ENCODE measurements at regions of chr3 and their contacts with region 1.

Region 1: DNA sequence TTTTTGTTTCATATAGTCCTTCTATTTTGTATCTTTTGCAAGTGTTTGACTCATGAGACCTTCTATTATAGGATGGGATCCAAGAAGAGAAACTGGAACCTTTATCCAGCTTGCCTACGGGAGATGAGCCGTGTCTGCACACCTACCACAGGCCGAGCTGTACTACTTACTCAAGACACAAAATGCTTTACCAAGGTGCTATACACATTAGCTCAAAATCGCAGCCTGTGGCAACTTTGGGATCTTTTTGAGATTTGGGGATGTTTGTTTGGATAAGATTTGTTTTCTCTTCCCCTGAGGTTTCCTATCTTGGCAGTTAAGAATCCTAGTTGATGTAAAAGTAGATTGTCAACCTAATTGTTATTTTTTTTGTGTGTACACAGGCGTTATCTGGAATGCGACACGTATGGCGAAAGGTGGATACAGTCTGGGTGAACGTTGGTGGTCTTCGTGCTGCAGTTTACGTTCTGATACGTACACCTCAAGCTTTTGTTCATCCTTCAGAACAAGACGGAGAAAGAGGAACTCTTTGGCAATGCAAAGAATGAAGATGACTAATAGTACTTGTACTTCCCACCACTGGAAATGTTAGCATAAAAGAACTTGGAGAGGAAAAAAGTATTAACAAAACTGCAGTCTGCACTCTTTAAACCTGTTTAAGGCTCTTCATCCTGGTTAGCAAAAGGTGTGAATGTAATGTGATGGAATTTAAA is 13.1 kb upstream of the SETD5 start:
- DNase-seq: no peak
- H3K4me3 ChIP-seq: no peak overlapping the region
- H3K27ac ChIP-seq: no peak overlapping the region
- H3K4me1 ChIP-seq: no peaks in the 10 kb centered on the region
- H3K27me3 ChIP-seq: no peaks in the 10 kb centered on the region
- CTCF ChIP-seq: no peak
- EP300 ChIP-seq: no peak
- POLR2A ChIP-seq: no peak

Region 2: GRCh38 chr3:9399746-9400145 is 15.4 kb after region 1 on chr3:
- intact Hi-C with region 1: no loop called
- DNase-seq: peak; percentile 74 to 79 (median 76)
- H3K4me3 ChIP-seq: peak overlapping the region; percentile 85
- H3K27ac ChIP-seq: peak overlapping the region in 1 of 2 donors; percentile 97
- H3K4me1 ChIP-seq: peaks cover 16% of the 10 kb centered on the region
- H3K27me3 ChIP-seq: no peaks in the 10 kb centered on the region
- CTCF ChIP-seq: no peak
- EP300 ChIP-seq: no peak
- POLR2A ChIP-seq: no peak

Region 3: GRCh38 chr3:9439331-9439730 is 55.0 kb after region 1 on chr3:
- intact Hi-C with region 1: loop called in 1 of 4 experiments (anchors 10 kb)
- DNase-seq: no peak
- H3K4me3 ChIP-seq: no peak overlapping the region
- H3K27ac ChIP-seq: no peak overlapping the region
- H3K4me1 ChIP-seq: peaks cover 1% of the 10 kb centered on the region
- H3K27me3 ChIP-seq: no peaks in the 10 kb centered on the region
- CTCF ChIP-seq: no peak
- EP300 ChIP-seq: no peak
- POLR2A ChIP-seq: no peak

Region 4: GRCh38 chr3:9473496-9474065 is 89.3 kb after region 1 on chr3:
- intact Hi-C with region 1: loop called in 1 of 4 experiments (anchors 10 kb)
- DNase-seq: no peak
- H3K4me3 ChIP-seq: no peak overlapping the region
- H3K27ac ChIP-seq: no peak overlapping the region
- H3K4me1 ChIP-seq: no peaks in the 10 kb centered on the region
- H3K27me3 ChIP-seq: no peaks in the 10 kb centered on the region
- CTCF ChIP-seq: no peak
- EP300 ChIP-seq: no peak
- POLR2A ChIP-seq: no peak